Mucosa of descending colon (tissue), 3 donors: ENCODE measurements at regions of chr11 and their contacts with region 1.

Region 1: DNA sequence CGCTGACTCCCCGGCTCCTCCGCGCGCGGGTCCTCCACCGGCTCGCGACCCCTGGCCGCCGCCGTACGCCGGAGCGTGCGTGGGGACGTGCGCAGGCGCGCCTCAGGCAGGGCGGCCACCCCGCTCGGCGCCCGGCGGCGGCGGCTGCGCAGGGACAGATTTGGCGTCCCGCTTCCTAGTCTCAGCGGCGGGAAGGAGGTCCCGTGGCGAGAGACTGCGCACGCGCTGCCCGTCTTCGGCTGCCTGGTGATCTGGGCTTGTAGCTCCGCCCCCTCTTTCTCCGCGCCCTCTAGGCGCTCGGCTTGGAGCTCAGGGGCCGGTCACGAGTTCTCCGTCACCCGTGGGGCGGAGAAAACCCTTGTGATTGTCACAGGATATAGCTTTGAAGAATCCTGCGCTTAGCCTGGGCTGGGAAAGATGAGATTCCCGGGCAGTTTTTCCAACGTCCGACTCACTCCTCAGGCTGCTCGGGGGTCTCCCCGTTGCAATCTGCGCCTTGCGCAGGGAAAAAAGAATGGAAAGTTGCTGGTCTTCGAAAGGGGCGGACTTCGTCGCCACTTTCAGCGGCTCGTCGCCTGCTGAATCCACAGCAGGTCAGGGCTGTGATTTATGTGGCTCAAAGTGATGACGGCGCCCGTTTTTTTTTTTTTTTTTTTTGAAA is at the start of gene PATL1:
- DNase-seq: peak; percentile 99 to 100 (median 99)
- ATAC-seq: peak; percentile 96
- H3K4me3 ChIP-seq: peak within 1 kb of the TSS; percentile 79
- H3K4me1 ChIP-seq: peaks cover 22% of the 10 kb centered on the region
- CTCF ChIP-seq: no peak
- total RNA-seq, gene PATL1: 34.1 to 40.2 (median 34.6) TPM

Region 2: GRCh38 chr11:59437770-59438169 is 231.3 kb before region 1 on chr11:
- intact Hi-C with region 1: no loop called
- DNase-seq: no peak
- ATAC-seq: no peak
- H3K4me3 ChIP-seq: no peak overlapping the region
- H3K4me1 ChIP-seq: no peaks in the 10 kb centered on the region
- CTCF ChIP-seq: no peak

Region 3: DNA sequence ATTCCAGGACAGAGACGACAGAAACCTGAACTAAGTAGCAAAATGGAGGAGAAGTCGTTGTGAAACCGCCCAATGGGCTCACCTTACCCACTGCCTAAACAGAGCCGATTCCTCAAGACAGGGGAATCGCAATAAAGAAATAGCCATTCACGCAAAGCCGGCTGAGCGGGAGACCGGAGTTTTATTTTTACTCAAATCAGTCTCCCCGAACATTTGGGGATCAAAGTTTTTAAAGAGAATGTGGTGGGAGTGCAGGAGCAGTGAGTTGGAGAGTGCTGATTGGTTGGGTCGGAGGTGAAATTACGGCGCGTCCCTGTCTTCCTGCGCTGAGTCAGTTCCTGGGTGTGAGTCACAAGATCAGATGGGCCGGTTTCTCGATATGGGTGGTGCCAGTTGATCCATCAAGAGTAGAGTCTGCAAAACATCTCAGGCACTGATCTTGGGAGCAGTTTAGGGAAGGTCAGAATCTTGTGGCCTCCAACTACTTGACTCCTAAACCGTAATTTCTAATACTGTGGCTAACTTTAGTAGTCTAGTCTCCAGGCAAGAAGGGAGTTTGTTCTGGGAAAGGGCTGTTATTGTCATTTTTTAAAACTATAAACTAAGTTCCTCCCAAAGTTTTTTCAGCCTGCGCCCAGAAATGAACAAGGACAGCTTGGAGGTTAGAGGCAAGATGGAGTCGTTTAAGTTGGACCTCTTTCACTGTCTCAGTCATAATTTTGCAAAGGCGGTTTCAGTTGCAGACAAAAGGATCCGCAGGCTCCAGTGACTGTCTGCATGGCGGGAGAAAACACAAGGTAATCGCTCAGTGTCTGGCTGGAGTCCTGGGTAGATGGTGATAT is 123.7 kb before region 1 on chr11:
- intact Hi-C with region 1: loop called in 1 of 2 experiments (anchors 10 kb)
- DNase-seq: no peak
- ATAC-seq: no peak
- H3K4me3 ChIP-seq: no peak overlapping the region
- H3K4me1 ChIP-seq: no peaks in the 10 kb centered on the region
- CTCF ChIP-seq: no peak

Region 4: DNA sequence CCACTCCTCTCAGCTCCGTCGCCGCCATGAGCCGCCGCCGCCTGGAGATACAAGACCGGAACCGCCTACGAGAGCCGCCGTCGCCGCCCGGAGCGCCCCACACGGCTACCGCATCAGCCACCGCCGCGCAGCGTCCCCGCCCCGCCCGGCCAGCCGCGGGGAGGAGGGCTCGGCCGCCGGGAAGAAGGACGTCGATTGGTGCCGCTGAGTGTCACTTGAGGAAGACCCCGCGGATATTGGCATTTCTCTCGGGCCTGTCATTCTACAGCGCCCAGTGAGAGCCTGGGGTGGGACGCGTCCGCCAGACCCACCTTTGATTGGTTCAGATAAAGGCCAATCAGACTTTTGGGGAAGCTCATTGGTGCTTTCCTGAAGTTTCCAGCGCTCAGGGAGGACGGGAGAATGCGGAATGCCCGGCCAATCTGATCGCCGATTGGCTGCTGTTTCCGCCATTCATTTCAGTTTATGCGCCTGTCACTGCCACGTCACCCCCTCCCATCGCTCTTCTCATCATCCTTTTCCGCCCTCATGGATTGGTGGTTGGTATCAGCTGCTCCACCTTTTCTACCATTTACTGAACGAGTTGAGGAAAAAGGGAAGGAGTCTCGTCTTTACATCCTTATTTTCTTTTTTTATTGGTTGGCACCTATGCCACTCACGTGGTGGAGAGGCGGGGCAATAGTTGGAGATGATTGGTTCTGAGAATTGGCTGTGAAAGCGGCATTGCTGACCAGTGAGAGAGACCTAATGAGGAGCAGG is 53.3 kb before region 1 on chr11 and contains the start of gene OSBP:
- intact Hi-C with region 1: loop called in 1 of 2 experiments (anchors 10 kb)
- DNase-seq: peak; percentile 96 to 100 (median 98)
- ATAC-seq: peak; percentile 87
- H3K4me3 ChIP-seq: peak within 1 kb of the TSS; percentile 87
- H3K4me1 ChIP-seq: peaks cover 33% of the 10 kb centered on the region
- CTCF ChIP-seq: no peak
- total RNA-seq, gene OSBP: 55.0 to 57.8 (median 55.9) TPM